ENCODE measurements at regions of chr4 and their contacts with region 1.

Region 1: DNA sequence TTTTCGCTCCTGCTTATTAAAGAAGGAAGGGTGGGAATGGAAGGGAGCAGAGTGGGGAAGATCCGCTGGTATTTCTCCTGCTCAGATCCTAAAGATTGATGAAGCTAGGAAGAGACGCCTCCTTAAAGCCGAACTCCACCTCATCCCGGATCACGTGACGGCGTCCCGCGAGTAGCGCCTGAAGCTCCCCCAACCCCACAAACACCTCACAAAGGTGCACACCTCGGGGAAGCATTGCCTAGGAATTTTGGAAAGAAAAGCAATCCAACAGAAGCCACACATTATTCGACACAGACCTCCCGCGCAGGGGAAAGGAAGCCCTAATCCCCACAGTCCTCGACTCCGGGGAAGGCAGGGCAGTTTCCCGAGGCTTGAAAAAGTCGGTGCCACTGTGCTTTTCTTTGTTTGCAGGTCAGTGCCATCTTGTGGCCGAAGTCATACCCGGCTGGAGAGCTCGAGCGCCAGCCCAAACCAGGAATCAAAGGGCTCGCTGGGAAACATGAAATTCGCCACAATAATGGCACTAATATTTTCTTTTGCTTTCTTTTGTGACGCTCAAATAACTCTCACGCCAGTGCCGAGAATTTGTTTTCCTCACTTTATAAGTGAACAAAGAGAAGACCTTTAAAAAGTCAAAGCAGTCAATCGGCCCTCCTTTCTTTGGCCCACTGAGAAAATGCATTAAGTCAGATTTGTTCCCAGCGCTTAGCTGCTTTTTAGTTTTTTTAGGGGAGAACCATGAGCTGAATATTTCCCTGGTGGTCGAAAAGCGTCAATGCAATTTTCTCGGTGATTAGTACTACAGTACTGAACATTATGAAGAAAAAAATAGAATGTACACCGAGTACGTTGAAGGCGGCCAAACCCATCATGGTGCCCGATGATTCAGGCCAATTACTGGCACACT is at the start of gene NPY1R:
- DNase-seq: peak in 1 of 2 experiments; percentile 73
- H3K4me3 ChIP-seq: peak within 1 kb of the TSS; percentile 50; the same call in 1 of the 2 replicates
- H3K27ac ChIP-seq: no peak within 1 kb of the TSS
- H3K4me1 ChIP-seq: 0 out of 2 replicates have a peak, but pooled peaks cover 4% of the 10 kb centered on the region
- H3K27me3 ChIP-seq: no peaks in the 10 kb centered on the region
- CTCF ChIP-seq: peak; percentile 65
- total RNA-seq, gene NPY1R: 0.41 TPM in 1 of 2 replicates, not detected in the other

Region 2: DNA sequence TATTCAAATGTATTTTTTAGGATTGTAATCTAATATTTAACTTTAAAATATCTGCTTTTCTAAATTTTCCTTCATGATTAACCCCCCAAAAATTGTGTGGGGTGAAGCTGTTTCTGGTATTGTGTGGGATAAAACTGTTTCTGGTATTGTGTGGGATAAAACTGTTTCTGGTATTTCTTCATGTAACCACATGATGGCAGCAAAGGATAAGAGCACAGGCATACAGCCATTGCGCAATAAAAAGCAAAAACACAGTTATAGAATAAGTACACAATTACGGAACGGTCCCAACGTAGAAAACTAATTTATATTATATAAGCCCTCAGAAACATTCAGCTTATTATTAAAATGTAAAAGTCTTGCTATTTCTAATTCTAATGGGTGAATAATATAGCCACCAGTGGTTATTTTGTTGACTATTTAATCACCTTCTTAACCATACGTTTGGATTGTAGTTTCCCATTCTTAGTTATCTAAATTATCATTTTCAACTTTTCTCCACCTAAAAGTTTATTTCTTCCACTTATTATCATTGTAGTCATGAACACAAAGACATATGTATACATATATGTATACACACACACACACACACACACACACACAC is 835.1 kb before region 1 on chr4:
- CTCF ChIA-PET with region 1: no interaction called
- POLR2A ChIA-PET with region 1: no interaction called
- intact Hi-C with region 1: loop called (anchors 1 kb)
- DNase-seq: no peak
- H3K4me3 ChIP-seq: no peak overlapping the region
- H3K27ac ChIP-seq: no peak overlapping the region
- H3K4me1 ChIP-seq: no peaks in the 10 kb centered on the region
- H3K27me3 ChIP-seq: no peaks in the 10 kb centered on the region
- CTCF ChIP-seq: peak; percentile 82

Region 3: DNA sequence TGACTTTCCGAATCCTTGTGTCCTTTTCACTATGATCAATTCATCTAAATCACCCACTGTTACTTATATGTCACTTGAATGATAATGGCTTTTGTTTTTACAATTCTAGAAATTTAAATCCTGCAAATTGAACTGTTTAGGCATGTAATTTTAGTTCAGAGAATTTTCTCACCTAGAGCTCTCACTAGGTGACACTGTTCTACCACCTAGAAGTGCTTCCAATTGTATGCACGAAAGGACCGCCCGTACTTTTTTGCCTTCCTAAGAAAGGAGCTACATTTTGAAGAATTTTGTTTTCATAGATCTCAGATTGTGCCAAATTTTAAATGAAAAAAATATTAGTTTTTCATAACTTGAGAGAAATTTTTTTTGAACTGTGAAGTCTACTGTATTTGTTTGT is 687.4 kb before region 1 on chr4:
- CTCF ChIA-PET with region 1: interaction called, 4 read pairs
- POLR2A ChIA-PET with region 1: no interaction called
- intact Hi-C with region 1: loop called (anchors 5 kb)
- DNase-seq: no peak
- H3K4me3 ChIP-seq: no peak overlapping the region
- H3K27ac ChIP-seq: no peak overlapping the region
- H3K4me1 ChIP-seq: no peaks in the 10 kb centered on the region
- H3K27me3 ChIP-seq: no peaks in the 10 kb centered on the region
- CTCF ChIP-seq: no peak; the same call in 1 of the 2 replicates

Region 4: DNA sequence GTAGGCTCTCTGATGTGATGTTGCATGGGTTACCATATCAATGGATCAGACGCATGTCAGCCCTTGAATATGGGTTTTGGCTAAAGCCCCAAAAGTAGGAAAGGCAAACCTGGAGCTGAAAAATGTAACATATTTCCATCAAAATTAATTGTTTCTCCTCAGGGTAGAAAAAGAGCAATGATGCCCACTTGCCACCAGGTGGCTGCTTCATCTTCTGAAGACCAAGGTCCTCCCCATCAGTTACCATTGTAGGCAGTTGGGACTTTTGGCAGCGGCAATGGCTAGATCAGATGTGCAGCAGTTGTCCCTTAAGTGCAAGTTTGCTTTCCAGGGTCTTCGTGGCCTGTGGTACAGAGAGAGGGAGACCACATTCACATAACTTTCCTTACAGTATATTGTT is 284.3 kb before region 1 on chr4:
- CTCF ChIA-PET with region 1: interaction called, 3 read pairs
- POLR2A ChIA-PET with region 1: no interaction called
- intact Hi-C with region 1: loop called (anchors 1 kb)
- DNase-seq: peak in 1 of 2 experiments; percentile 15
- H3K4me3 ChIP-seq: no peak overlapping the region
- H3K27ac ChIP-seq: no peak overlapping the region
- H3K4me1 ChIP-seq: no peaks in the 10 kb centered on the region
- H3K27me3 ChIP-seq: no peaks in the 10 kb centered on the region
- CTCF ChIP-seq: peak; percentile 65

Region 5: GRCh38 chr4:163121689-163122088 is 211.1 kb before region 1 on chr4:
- CTCF ChIA-PET with region 1: no interaction called
- POLR2A ChIA-PET with region 1: no interaction called
- intact Hi-C with region 1: no loop called
- DNase-seq: no peak
- H3K4me3 ChIP-seq: no peak overlapping the region
- H3K27ac ChIP-seq: no peak overlapping the region
- H3K4me1 ChIP-seq: no peaks in the 10 kb centered on the region
- H3K27me3 ChIP-seq: no peaks in the 10 kb centered on the region
- CTCF ChIP-seq: no peak

Region 6: GRCh38 chr4:163166041-163166579 is 166.6 kb before region 1 on chr4:
- CTCF ChIA-PET with region 1: no interaction called
- POLR2A ChIA-PET with region 1: no interaction called
- intact Hi-C with region 1: loop called (anchors 2 kb)
- DNase-seq: peak in 1 of 2 experiments; percentile 49
- H3K4me3 ChIP-seq: peak overlapping the region; percentile 82
- H3K27ac ChIP-seq: peak overlapping the region; percentile 71
- H3K4me1 ChIP-seq: peaks cover 17% of the 10 kb centered on the region; the same call in 1 of the 2 replicates
- H3K27me3 ChIP-seq: no peaks in the 10 kb centered on the region
- CTCF ChIP-seq: no peak

Region 7: GRCh38 chr4:163350672-163351071 is 17.9 kb after region 1 on chr4:
- CTCF ChIA-PET with region 1: no interaction called
- POLR2A ChIA-PET with region 1: no interaction called
- intact Hi-C with region 1: no loop called
- DNase-seq: no peak
- H3K4me3 ChIP-seq: no peak overlapping the region
- H3K27ac ChIP-seq: no peak overlapping the region
- H3K4me1 ChIP-seq: no peaks in the 10 kb centered on the region
- H3K27me3 ChIP-seq: no peaks in the 10 kb centered on the region
- CTCF ChIP-seq: no peak

Region 8: DNA sequence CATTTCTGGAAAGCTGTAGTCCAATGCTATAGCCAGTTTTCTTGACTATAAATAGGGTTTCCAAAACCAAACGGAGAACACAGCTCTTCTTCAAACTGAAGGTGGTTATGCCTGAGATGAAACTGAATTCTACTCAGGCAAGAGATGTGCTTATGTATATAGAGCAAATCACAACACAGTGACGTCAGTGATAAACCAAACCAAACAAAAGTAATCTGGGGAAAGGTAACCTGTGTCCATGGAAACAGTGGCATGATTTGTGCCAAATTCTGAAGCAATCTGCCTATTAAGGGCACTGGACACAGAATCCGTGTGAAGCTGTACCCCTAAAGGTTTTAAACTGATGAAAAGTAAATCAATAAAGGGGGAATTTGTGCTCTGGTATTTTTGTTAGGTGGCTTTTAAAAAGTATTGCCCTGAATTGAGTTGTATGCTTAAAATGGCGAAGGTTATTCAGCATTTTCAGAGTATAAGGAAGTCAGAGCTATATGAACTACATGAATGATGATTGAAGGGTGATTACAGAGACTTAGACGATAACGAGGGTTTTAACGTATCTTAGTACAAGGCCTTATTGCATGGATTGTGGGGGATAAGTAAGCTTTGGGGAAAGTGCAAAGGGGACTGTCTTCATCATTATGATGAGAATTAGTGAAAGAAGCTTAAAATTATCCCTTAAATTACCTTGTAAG is 49.6 kb after region 1 on chr4:
- CTCF ChIA-PET with region 1: interaction called, 11 read pairs
- POLR2A ChIA-PET with region 1: no interaction called
- intact Hi-C with region 1: no loop called
- DNase-seq: no peak
- H3K4me3 ChIP-seq: no peak overlapping the region
- H3K27ac ChIP-seq: no peak overlapping the region
- H3K4me1 ChIP-seq: peaks cover 11% of the 10 kb centered on the region; the same call in 1 of the 2 replicates
- H3K27me3 ChIP-seq: no peaks in the 10 kb centered on the region
- CTCF ChIP-seq: no peak

Region 9: DNA sequence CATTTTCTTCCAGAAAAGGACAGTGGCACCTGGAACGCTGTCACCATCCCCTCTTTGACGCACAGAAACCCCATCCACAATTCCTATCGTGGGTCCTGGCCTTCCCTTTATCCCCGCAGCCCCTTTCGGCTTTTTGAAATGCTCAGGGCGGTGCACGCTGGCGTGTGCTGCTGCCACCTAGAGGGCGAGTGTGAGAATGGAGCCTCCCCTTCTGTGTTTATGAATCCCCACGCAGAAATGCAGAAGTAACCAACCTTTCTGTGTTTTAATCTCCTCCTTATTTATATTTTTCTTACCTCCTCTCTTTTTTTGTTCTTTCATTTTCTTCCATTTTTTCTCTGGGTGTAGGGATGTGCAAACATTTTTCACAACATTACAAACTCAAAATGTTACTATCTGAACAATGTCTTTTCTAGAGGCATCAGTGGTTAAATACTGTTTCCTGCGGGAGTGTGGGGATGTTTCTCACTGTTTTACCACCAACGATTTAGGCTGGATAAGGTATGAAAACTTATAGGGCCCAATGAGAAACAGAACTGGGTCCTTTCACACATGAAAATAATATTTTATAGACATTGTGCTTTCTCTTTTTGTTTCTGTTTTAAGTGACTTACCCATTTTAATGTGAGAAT is 211.8 kb after region 1 on chr4:
- CTCF ChIA-PET with region 1: interaction called, 4 read pairs
- POLR2A ChIA-PET with region 1: no interaction called
- intact Hi-C with region 1: loop called (anchors 2 kb)
- DNase-seq: peak in 1 of 2 experiments; percentile 28
- H3K4me3 ChIP-seq: peak overlapping the region; percentile 46; the same call in 1 of the 2 replicates
- H3K27ac ChIP-seq: no peak overlapping the region
- H3K4me1 ChIP-seq: no peaks in the 10 kb centered on the region
- H3K27me3 ChIP-seq: no peaks in the 10 kb centered on the region
- CTCF ChIP-seq: peak; percentile 84

Measured in PC-9 (cell line).